PC-9 (cell line): ENCODE measurements at regions of chr3 and their contacts with region 1.

Region 1: DNA sequence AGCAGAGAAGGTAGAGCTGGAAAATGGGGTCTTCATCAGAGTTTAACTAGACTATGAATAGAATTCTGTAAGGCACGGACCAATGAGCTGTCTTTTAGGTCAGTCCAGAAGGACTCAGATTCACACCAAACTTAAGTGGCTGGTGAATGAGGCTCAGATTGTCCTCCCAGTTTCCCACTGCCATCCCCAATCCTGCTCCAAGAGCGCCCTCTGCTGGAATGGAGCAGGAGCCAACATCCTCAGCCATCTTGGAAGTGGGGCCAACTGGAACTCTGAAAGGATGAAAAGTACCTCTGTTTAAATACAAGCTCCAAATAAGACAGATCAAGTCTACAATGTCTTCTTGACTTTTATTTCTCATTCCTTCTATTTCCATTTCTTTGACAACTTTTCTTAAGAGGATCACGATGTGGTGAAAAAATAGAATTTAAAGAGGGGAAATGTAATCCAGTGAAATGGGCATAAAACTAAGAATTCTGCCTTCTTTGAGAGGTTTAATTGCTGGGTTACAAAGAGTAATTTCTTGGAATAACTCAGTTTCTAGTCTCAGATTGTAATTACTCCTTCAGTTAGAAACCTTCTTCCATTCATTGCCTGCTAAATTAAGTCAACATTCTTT is 217.1 kb upstream of the TPRG1 start:
- DNase-seq: peak; percentile 67 to 85
- H3K4me3 ChIP-seq: no peak overlapping the region
- H3K27ac ChIP-seq: no peak overlapping the region
- H3K4me1 ChIP-seq: peaks cover 21% of the 10 kb centered on the region
- H3K27me3 ChIP-seq: no peaks in the 10 kb centered on the region
- CTCF ChIP-seq: peak; percentile 98

Region 2: DNA sequence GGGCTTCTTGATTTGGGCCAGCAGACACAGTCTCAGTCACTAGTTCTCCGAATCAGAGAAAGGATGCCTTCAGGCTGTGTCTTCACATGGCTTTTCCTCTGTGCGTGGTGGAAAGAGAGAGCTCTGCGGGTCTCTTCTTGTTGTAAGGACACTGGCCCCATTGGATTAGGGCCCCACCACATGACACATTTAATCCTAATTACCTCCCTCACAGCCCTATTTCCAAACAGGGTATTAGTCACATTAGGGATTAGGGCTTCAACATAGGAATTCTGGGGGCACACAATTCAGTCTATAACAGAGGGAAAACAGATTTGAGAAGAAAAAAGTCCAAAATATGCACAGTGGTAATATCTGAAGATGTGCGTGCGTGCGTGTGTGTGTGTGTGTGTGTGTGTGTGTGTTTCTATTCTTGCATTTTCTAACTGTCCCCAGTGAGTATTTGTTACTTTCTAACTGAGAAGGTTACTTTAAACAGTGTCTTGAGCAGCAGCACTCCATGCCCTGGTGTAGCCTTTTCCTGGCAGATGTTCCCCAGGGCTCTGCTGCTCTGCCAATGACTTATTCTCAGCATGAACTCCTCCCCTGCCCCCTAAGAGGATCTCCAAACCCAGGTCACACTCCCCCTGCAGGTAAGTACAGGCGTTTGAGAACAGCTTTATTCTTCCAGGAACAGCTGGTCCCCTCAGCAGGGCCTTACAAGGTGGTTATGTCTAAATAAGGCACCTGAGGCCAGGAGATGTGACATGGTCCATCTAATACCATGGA is 1888.3 kb before region 1 on chr3:
- CTCF ChIA-PET with region 1: interaction called, 11 read pairs
- POLR2A ChIA-PET with region 1: no interaction called
- intact Hi-C with region 1: no loop called
- DNase-seq: peak; percentile 23 to 60
- H3K4me3 ChIP-seq: no peak overlapping the region
- H3K27ac ChIP-seq: no peak overlapping the region
- H3K4me1 ChIP-seq: peaks cover 49% of the 10 kb centered on the region
- H3K27me3 ChIP-seq: no peaks in the 10 kb centered on the region
- CTCF ChIP-seq: peak; percentile 42; the same call in 1 of the 2 replicates

Region 3: DNA sequence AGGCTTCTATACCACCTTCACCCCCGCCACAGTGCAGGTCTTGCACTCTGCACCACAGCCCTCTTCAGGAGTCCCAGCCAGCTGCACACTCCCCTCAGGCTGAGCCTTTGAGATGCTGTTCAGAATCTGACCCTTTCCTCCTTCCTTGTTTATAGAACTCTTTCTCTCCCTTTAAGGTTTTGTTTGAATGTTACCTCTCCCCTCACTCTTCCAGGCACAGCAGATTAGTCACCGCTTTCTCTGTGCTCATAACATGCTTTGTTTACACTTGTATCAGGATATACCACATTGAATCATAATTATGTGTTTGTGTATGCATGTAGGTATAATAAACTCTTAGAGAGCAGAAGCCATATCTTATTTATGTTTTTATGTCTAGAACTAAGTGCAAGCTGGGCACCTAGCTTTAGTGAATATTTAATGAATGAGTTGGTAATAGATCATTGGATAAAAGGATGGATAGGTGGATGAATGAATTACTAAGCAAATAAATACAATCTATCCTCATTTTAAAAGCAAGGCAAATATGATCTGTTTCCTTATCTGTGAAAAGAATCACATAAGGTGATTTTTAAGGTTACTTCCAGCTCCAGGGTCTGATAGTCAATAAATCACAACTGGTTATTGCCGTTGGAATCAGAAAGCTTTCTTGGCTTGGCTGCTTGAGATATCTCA is 1040.9 kb before region 1 on chr3:
- CTCF ChIA-PET with region 1: no interaction called
- POLR2A ChIA-PET with region 1: interaction called, 16 read pairs
- intact Hi-C with region 1: loop called (anchors 10 kb)
- DNase-seq: peak; percentile 64 to 100
- H3K4me3 ChIP-seq: peak overlapping the region; percentile 15; the same call in 1 of the 2 replicates
- H3K27ac ChIP-seq: peak overlapping the region; percentile 94
- H3K4me1 ChIP-seq: peaks cover 85% of the 10 kb centered on the region
- H3K27me3 ChIP-seq: no peaks in the 10 kb centered on the region
- CTCF ChIP-seq: no peak

Region 4: DNA sequence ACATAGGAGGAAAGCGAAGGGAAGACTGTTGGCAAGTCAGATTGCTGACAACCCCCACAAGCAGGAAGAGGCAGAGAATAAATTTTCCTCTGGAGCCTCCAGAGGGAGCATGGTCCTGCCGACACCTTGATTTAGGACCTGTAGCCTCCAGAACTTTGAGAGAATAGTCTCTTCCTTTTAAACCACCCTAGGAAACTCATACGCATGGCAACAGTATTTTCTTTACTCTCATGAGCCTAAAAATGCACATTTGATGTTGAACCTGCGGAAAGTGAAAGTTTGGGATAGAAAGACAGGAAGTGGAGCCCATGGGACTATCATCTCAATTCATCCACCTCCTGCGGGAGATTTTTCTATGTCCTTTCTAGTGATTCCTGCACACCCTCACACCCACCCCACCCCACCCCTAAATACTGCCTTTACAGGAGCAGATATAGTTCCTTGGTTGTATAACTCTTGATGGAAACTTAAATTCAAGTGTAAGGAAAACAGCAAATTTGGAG is 917.4 kb before region 1 on chr3:
- CTCF ChIA-PET with region 1: no interaction called
- POLR2A ChIA-PET with region 1: no interaction called
- intact Hi-C with region 1: loop called (anchors 2 kb)
- DNase-seq: peak in 1 of 2 experiments; percentile 36
- H3K4me3 ChIP-seq: no peak overlapping the region
- H3K27ac ChIP-seq: peak overlapping the region; percentile 35
- H3K4me1 ChIP-seq: peaks cover 47% of the 10 kb centered on the region
- H3K27me3 ChIP-seq: no peaks in the 10 kb centered on the region
- CTCF ChIP-seq: peak; percentile 64

Region 5: GRCh38 chr3:188294823-188295487 is 659.7 kb before region 1 on chr3:
- CTCF ChIA-PET with region 1: interaction called, 3 read pairs
- POLR2A ChIA-PET with region 1: interaction called, 3 read pairs
- intact Hi-C with region 1: loop called (anchors 5 kb)
- DNase-seq: peak; percentile 63 to 99
- H3K4me3 ChIP-seq: peak overlapping the region; percentile 8; the same call in 1 of the 2 replicates
- H3K27ac ChIP-seq: peak overlapping the region; percentile 77
- H3K4me1 ChIP-seq: peaks cover 55% of the 10 kb centered on the region
- H3K27me3 ChIP-seq: no peaks in the 10 kb centered on the region
- CTCF ChIP-seq: no peak

Region 6: DNA sequence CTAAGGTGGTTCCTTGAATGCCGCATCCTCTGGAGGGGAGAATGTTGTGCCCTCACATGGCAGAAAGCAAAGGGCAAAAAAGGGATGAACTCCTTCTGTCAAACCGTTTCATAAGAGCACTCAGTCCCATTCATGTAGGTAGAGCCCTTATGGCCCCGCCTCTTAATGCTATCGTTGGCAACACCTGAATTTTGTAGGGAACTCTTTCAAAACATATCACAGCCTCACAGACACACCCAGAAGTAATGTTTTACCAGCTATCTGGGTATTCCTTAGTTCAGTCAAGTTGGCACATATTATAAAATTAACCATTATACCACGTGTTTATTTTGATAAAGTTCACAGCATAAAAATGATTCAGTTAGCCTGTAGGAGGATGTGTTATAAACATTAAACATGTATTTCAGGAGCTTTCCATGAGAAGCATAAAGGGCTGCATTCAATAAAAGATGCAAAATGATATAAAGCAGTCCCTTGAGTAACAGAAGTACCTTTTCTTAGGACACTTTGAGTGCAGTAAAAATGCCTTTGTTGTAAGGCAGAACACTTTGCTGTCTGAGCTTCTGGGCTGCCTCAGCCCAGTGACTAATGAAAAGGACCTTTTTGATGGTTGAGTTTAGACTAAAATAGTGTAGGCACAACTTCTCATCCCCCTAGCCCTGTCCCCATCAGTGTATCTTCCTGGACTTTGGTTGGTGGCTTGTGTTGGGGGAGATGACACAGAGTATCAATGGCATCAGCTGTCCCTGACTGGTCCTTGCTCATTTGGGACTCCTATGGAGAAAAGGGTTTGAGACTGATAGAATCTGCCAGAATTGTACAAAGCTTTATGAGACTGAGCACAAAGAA is 46.5 kb before region 1 on chr3:
- CTCF ChIA-PET with region 1: no interaction called
- POLR2A ChIA-PET with region 1: no interaction called
- intact Hi-C with region 1: no loop called
- DNase-seq: no peak
- H3K4me3 ChIP-seq: no peak overlapping the region
- H3K27ac ChIP-seq: no peak overlapping the region
- H3K4me1 ChIP-seq: no peaks in the 10 kb centered on the region
- H3K27me3 ChIP-seq: no peaks in the 10 kb centered on the region
- CTCF ChIP-seq: no peak

Region 7: DNA sequence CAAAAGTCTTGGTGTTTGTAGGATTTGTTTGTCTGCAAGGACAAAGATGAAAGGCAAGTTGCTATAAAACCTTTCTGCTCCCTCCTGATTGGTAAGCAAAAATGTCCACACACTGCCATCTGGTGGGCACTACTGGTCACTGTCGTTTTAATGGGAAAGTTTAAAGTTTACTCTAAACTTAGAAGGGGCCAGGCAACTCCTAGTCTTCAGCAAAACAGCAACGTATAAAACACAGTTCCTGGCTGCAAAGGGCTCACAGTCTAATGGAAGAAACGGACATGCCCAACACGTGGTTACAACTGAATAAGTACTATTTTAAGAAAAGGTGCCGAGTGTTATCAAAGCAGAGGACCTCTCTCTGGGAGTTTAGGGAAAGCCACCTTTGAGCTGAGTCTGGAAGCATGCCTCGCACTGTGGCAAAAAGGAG is 193.4 kb after region 1 on chr3:
- CTCF ChIA-PET with region 1: interaction called, 6 read pairs
- POLR2A ChIA-PET with region 1: no interaction called
- intact Hi-C with region 1: loop called (anchors 1 kb)
- DNase-seq: peak; percentile 59
- H3K4me3 ChIP-seq: no peak overlapping the region
- H3K27ac ChIP-seq: no peak overlapping the region
- H3K4me1 ChIP-seq: peaks cover 7% of the 10 kb centered on the region
- H3K27me3 ChIP-seq: no peaks in the 10 kb centered on the region
- CTCF ChIP-seq: peak; percentile 97

Region 8: DNA sequence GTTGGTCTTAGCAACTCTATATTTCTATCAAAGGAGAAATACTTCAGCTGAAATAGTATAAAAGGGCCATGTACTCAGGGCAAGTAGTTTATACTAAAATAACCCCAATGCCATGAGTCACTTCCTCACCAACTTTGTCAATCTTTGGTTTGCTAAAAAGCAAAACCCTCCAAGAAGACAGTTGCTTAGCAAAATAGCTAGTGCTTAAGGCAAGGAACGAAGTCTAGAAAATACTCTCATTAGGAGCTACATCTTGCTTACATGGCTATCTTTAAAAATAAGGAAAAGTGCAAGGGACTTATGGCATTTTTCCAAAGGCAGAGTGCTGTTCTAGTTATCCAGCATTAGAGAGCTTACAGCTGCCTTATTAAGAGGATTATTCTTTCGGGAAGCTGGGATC is 1137.6 kb after region 1 on chr3:
- CTCF ChIA-PET with region 1: no interaction called
- POLR2A ChIA-PET with region 1: no interaction called
- intact Hi-C with region 1: no loop called
- DNase-seq: no peak
- H3K4me3 ChIP-seq: no peak overlapping the region
- H3K27ac ChIP-seq: no peak overlapping the region
- H3K4me1 ChIP-seq: peaks cover 7% of the 10 kb centered on the region; the same call in 1 of the 2 replicates
- H3K27me3 ChIP-seq: no peaks in the 10 kb centered on the region
- CTCF ChIP-seq: no peak